Left cardiac atrium (tissue), 4 donors: ENCODE measurements at regions of chr17 and their contacts with region 1.

Region 1: GRCh38 chr17:64129764-64130558 is at the start of gene ERN1:
- DNase-seq: peak; percentile 95
- ATAC-seq: peak; percentile 96 to 98
- total RNA-seq, gene ERN1: 11.4 to 15.4 TPM

Region 2: GRCh38 chr17:63911657-63912426 is 218.1 kb before region 1 on chr17:
- intact Hi-C with region 1: loop called (anchors 5 kb)
- DNase-seq: no peak
- ATAC-seq: peak; percentile 65 to 69

Region 3: DNA sequence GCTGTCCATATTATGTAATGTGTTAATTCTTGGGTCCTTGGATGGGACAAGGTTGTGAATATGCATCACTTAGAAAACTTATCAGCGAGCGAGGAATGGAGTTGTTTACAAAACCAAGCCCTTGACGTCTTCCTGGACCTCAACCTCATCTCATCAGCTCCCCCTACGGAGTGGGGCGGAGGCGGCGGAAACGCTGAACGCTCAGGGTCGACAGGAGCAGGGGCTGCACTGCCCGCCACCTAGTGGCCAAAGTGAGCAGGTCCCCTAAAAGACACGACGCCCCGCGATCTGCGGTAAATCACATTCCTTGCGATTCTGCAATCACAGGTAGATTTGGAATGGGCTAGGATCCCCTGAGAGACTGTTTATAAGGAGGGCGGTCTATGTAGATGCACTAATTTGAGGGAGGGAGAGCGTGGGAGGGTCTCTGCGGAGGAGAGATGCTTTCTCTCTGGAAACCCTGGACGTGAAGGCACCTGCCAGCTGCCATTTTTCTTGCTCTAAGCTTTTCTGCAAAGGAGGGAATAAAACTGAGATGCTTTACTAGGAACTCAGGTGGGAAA is 104.1 kb before region 1 on chr17:
- intact Hi-C with region 1: loop called (anchors 2 to 5 kb)
- DNase-seq: peak; percentile 85
- ATAC-seq: peak; percentile 79

Region 4: GRCh38 chr17:64063766-64064224 is 66.2 kb before region 1 on chr17:
- intact Hi-C with region 1: loop called (anchors 10 kb)
- DNase-seq: peak; percentile 71
- ATAC-seq: peak; percentile 55 to 72

Region 5: DNA sequence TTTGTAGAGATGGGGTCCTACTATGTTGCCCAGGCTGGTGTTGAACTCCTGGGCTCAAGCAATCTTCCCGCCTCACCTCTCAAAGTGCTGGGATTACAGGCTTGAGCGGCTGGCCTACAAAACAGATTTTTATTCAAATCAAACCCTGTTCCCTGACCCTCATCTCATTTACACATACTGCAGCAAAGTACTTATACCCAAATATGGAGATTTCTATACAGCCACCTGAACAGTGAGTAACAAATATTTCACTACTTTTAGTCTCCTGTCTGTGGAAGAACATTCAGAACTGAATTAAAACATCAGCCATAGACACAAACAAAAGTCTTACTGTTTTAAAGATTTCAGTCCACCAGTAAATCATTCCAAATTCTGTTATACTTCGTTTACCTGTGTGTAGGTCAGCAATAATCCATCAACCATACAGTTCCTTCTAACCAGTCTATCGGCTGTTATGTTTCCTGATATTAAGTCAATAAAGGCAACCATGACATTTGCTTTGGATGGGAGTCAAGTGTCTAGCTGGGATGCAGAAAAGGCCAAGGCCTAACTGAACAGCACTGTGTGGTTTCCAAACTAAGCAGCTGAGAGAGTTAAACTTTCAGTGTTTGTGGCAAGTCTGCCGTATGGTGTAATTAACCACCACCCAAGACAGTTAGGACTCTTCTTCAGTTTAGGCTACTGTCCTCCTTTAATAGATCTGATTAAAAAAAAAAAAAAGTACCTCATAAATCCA is 22.3 kb before region 1 on chr17:
- intact Hi-C with region 1: no loop called
- DNase-seq: no peak
- ATAC-seq: peak in 1 of 2 donors; percentile 17